Endothelial cell of umbilical vein (primary cell): ENCODE measurements at regions of chr2 and their contacts with region 1.

Region 1: GRCh38 chr2:74250189-74250631 is 51.8 kb downstream of the MTHFD2 start:
- DNase-seq: peak; percentile 37
- H3K4me3 ChIP-seq: no peak overlapping the region
- H3K27ac ChIP-seq: no peak overlapping the region
- H3K4me1 ChIP-seq: no peaks in the 10 kb centered on the region
- H3K27me3 ChIP-seq: peaks cover 0 to 2% of the 10 kb centered on the region in 2 experiments
- CTCF ChIP-seq: peak; percentile 61 to 77
- POLR2A ChIP-seq: no peak

Region 2: DNA sequence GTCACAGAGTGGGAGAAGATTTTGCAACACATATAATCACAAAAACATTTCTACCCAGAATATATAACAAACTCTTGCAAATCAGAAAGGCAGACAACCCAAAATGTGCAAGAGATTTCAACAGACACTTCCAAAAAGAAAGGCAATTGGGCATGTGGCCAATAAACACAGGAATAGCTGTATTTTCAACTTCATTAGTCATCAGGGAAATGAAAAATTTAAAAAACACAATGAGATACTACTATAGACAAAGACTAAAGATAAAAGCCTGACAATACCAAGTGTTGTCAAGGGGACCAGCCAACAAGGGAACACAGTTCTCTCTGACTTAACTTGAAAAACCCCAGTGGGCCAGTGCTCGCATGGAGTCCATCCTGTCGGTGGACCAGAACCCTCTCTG is 11.3 kb before region 1 on chr2:
- CTCF ChIA-PET with region 1: interaction called, 21 read pairs
- POLR2A ChIA-PET with region 1: no interaction called
- dilution Hi-C with region 1: no loop called
- intact Hi-C with region 1: no loop called
- DNase-seq: peak; percentile 8
- H3K4me3 ChIP-seq: no peak overlapping the region
- H3K27ac ChIP-seq: no peak overlapping the region
- H3K4me1 ChIP-seq: no peaks in the 10 kb centered on the region
- H3K27me3 ChIP-seq: no peaks in the 10 kb centered on the region
- CTCF ChIP-seq: no peak
- POLR2A ChIP-seq: no peak

Region 3: DNA sequence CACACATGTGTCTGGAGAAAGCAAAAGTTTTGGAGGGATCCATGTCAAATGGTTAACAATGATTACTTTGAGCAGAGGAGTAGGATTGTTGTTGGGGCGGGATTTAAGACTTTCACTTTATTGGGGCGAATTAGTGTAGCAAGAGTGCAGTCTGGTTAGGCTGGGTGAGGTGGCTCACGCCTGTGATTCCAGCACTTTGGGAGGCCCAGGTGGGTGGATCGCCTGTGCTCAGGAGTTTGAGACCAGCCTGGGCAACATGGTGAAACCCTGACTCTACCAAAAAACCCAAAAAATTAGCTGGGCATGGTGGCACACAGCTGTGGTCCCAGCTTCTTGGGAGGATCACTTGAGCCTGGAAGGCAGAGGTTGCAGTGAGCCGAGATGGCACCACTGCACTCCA is 17.3 kb after region 1 on chr2:
- CTCF ChIA-PET with region 1: interaction called, 14 read pairs
- POLR2A ChIA-PET with region 1: no interaction called
- dilution Hi-C with region 1: no loop called
- intact Hi-C with region 1: no loop called
- DNase-seq: no peak
- H3K4me3 ChIP-seq: no peak overlapping the region
- H3K27ac ChIP-seq: no peak overlapping the region
- H3K4me1 ChIP-seq: no peaks in the 10 kb centered on the region
- H3K27me3 ChIP-seq: peaks cover 2 to 7% of the 10 kb centered on the region in 2 experiments
- CTCF ChIP-seq: no peak
- POLR2A ChIP-seq: no peak

Region 4: DNA sequence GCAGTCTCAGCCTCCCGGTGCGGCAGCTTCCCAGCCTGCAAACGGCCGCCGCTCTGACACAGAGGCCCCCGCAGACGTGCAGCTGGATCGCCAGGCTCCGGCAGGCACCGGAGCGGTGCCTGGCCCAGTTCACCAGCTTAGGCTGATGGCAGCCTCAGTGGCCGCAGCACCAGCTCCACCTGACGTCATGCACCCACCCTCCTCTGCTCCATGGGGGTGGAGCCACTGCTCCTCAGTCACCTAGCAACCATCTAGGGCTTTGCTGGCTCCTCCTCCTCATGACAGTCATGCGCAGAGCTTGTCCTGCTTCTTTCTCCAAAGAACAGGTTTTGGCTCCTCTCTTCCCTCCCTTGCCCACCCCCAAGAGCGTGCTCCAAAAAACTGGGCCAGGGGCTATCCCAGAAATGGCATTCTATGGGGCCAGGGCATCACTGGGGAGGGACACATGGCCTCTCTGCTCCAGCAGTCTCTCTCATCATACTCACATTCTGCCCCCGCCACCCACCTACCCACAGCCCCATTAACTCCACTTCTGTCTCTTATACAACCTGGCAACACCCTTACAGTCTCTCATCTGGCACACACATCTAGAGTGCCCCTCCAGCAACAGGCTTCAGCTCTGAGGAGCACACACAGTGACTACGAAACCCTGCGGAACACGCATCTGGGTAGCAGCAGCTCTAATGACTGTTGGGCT is 124.4 kb after region 1 on chr2:
- CTCF ChIA-PET with region 1: no interaction called
- POLR2A ChIA-PET with region 1: no interaction called
- dilution Hi-C with region 1: no loop called
- intact Hi-C with region 1: no loop called
- DNase-seq: peak; percentile 19
- H3K4me3 ChIP-seq: no peak overlapping the region
- H3K27ac ChIP-seq: no peak overlapping the region
- H3K4me1 ChIP-seq: no peaks in the 10 kb centered on the region
- H3K27me3 ChIP-seq: no peaks in the 10 kb centered on the region
- CTCF ChIP-seq: no peak
- POLR2A ChIP-seq: no peak

Region 5: GRCh38 chr2:74399785-74400184 is 149.6 kb after region 1 on chr2:
- CTCF ChIA-PET with region 1: interaction called, 3 read pairs
- POLR2A ChIA-PET with region 1: no interaction called
- dilution Hi-C with region 1: no loop called
- intact Hi-C with region 1: loop called (anchors 2 kb)
- DNase-seq: peak; percentile 41
- H3K4me3 ChIP-seq: no peak overlapping the region
- H3K27ac ChIP-seq: no peak overlapping the region
- H3K4me1 ChIP-seq: no peaks in the 10 kb centered on the region
- H3K27me3 ChIP-seq: peaks cover 0 to 2% of the 10 kb centered on the region in 2 experiments
- CTCF ChIP-seq: peak; percentile 42 to 53
- POLR2A ChIP-seq: no peak

Region 6: GRCh38 chr2:74587664-74588277 is 337.6 kb after region 1 on chr2:
- CTCF ChIA-PET with region 1: interaction called, 18 read pairs
- POLR2A ChIA-PET with region 1: no interaction called
- dilution Hi-C with region 1: no loop called
- intact Hi-C with region 1: loop called (anchors 2 kb)
- DNase-seq: peak; percentile 73
- H3K4me3 ChIP-seq: no peak overlapping the region
- H3K27ac ChIP-seq: no peak overlapping the region
- H3K4me1 ChIP-seq: no peaks in the 10 kb centered on the region
- H3K27me3 ChIP-seq: peaks cover 21 to 38% of the 10 kb centered on the region in 2 experiments
- CTCF ChIP-seq: peak; percentile 51 to 54
- POLR2A ChIP-seq: no peak

Region 7: GRCh38 chr2:74789271-74789670 is 539.1 kb after region 1 on chr2:
- CTCF ChIA-PET with region 1: no interaction called
- POLR2A ChIA-PET with region 1: no interaction called
- dilution Hi-C with region 1: no loop called
- intact Hi-C with region 1: no loop called
- DNase-seq: no peak
- H3K4me3 ChIP-seq: no peak overlapping the region
- H3K27ac ChIP-seq: no peak overlapping the region
- H3K4me1 ChIP-seq: no peaks in the 10 kb centered on the region
- H3K27me3 ChIP-seq: no peaks in the 10 kb centered on the region
- CTCF ChIP-seq: no peak
- POLR2A ChIP-seq: no peak